ENCODE measurements at regions of chr4 and their contacts with region 1.

Region 1: DNA sequence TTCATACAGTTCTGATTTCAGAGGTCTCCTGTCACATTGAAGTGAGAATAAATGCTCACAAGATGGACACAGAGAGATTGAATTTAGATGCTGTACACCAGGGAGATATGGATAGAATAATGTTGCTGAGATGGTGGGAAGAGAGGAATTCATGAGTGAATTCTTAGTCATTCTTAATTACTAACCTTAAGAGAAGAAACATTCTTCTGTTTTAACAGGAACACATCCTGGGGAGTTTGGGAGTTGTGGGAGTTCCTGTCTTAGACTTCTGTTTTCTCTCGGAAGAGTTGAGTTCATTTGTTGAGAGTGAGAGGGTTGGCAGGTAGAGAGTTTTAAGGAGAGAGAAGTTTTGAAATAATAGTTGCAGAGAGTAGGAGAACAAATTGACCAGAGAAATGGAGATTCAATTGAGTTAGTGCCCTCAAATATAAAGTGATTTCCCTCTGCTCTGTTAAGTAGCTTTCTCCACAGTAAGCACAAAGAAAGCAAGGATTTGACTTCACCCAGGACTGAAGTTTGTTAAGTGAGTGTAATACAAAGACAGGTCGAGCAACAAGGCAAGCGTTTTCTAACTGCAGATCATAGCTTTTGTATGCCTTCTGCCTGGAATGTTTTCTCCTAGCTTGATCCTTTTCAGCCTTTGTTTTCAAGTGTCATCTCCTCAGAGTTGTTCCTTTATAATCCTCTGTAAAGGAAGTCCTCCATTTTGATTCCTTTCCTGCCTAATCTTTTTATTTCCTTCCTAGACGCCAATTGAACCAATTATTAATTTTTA is 205.9 kb downstream of the RAPGEF2 start:
- DNase-seq: no peak
- H3K4me3 ChIP-seq: no peak overlapping the region
- H3K27ac ChIP-seq: no peak overlapping the region
- H3K4me1 ChIP-seq: peaks cover 0 to 8% (median 3%) of the 10 kb centered on the region in 4 experiments; a peak in 2 of 7 replicates
- H3K27me3 ChIP-seq: no peaks in the 10 kb centered on the region
- CTCF ChIP-seq: no peak
- EP300 ChIP-seq: no peak
- POLR2A ChIP-seq: no peak
- RAD21 ChIP-seq: no peak

Region 2: DNA sequence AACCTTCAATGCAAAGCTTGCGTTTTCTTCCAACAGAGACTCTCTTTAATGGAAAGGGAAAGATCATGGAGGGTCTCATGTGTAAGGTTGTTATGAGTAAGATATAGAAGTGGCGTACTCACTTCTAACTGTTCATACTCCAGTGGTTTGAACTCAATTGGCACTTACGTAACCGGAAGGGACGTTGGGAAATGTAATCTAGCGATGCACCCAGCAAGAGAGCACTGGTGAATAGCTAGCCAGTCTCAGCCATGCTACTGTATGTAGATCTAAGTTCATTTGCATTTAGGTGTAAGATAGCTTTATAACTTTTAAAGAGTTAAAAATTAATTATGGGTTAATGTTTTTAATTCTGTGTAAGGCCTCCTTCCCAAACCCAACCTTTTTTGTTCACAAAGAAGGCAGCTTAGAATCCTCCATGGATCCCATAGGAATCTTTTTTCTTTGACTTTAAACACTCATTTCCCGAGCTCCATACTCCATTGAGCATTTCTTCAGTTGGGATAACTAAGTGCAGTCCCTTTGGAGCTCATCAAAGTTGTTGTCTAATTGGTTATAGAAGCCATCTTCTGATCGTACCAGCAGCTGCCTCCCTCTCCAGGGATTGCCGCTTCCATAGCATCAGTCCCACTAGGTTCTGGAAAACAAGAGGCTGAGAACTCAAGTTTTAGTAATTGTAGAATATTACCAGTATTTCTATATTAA is 14.8 kb before region 1 on chr4:
- CTCF ChIA-PET with region 1: interaction called, 15 read pairs
- POLR2A ChIA-PET with region 1: no interaction called
- DNase-seq: no peak
- H3K4me3 ChIP-seq: no peak overlapping the region
- H3K27ac ChIP-seq: no peak overlapping the region
- H3K4me1 ChIP-seq: no peaks in the 10 kb centered on the region
- H3K27me3 ChIP-seq: no peaks in the 10 kb centered on the region
- CTCF ChIP-seq: no peak
- EP300 ChIP-seq: no peak
- POLR2A ChIP-seq: no peak
- RAD21 ChIP-seq: no peak

Measured in H1 (cell line).